Endothelial cell of umbilical vein (primary cell): ENCODE measurements at regions of chr2 and their contacts with region 1.

Region 1: GRCh38 chr2:70616168-70616694 is 62.6 kb upstream of the TGFA start:
- DNase-seq: no peak
- H3K4me3 ChIP-seq: no peak overlapping the region
- H3K27ac ChIP-seq: no peak overlapping the region
- H3K4me1 ChIP-seq: no peaks in the 10 kb centered on the region
- H3K27me3 ChIP-seq: peaks cover 8 to 11% of the 10 kb centered on the region in 2 experiments
- CTCF ChIP-seq: no peak
- POLR2A ChIP-seq: no peak

Region 2: GRCh38 chr2:70333260-70333659 is 283.0 kb before region 1 on chr2:
- CTCF ChIA-PET with region 1: interaction called, 258 read pairs
- POLR2A ChIA-PET with region 1: no interaction called
- dilution Hi-C with region 1: no loop called
- intact Hi-C with region 1: no loop called
- DNase-seq: no peak
- H3K4me3 ChIP-seq: no peak overlapping the region
- H3K27ac ChIP-seq: no peak overlapping the region
- H3K4me1 ChIP-seq: no peaks in the 10 kb centered on the region
- H3K27me3 ChIP-seq: peaks cover 0 to 4% of the 10 kb centered on the region in 2 experiments
- CTCF ChIP-seq: no peak
- POLR2A ChIP-seq: no peak

Region 3: DNA sequence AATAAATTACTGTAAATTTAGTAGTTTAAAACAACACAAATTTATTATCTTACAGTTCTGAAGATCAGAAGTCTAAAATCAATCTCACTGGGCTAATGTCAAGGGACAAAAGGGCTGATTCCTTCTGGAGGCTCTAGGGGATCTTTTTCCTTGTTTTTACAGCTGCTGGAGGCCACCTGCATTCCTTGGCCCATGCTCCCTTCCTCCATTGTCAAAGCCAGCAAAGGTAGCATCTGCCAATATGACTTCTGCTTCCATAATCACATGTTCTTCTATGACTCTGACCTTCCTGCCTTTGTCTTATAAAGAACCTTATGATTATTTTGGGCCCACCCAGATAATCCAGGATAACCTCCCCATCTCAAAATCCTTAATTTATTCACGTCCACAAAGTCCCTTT is 268.4 kb before region 1 on chr2:
- CTCF ChIA-PET with region 1: interaction called, 258 read pairs
- POLR2A ChIA-PET with region 1: no interaction called
- dilution Hi-C with region 1: no loop called
- intact Hi-C with region 1: no loop called
- DNase-seq: no peak
- H3K4me3 ChIP-seq: no peak overlapping the region
- H3K27ac ChIP-seq: no peak overlapping the region
- H3K4me1 ChIP-seq: no peaks in the 10 kb centered on the region
- H3K27me3 ChIP-seq: no peaks in the 10 kb centered on the region
- CTCF ChIP-seq: no peak
- POLR2A ChIP-seq: no peak

Region 4: GRCh38 chr2:70425687-70426301 is 190.4 kb before region 1 on chr2:
- CTCF ChIA-PET with region 1: no interaction called
- POLR2A ChIA-PET with region 1: no interaction called
- dilution Hi-C with region 1: no loop called
- intact Hi-C with region 1: no loop called
- DNase-seq: no peak
- H3K4me3 ChIP-seq: no peak overlapping the region
- H3K27ac ChIP-seq: no peak overlapping the region
- H3K4me1 ChIP-seq: no peaks in the 10 kb centered on the region
- H3K27me3 ChIP-seq: peaks cover 1 to 3% of the 10 kb centered on the region in 2 experiments
- CTCF ChIP-seq: no peak
- POLR2A ChIP-seq: no peak

Region 5: DNA sequence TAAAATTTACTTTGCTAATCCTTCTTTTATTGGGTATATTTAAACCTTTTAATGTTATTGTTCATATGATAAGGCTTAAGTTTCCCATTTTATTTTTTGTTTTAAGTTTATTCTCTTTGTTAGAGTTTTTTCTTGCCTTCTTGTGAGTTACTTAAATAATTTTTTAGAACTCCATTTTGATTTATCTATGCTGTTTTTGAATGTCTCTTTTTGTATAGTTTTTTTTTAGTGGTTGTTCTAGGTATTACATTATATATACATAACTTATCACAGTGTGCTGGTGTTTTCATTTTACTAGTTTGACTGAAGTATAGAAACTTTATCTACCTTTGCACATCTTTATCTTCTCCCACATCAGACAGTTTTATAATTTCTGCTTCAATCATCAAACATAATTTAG is 13.2 kb before region 1 on chr2:
- CTCF ChIA-PET with region 1: interaction called, 13 read pairs
- POLR2A ChIA-PET with region 1: no interaction called
- dilution Hi-C with region 1: no loop called
- intact Hi-C with region 1: no loop called
- DNase-seq: no peak
- H3K4me3 ChIP-seq: no peak overlapping the region
- H3K27ac ChIP-seq: no peak overlapping the region
- H3K4me1 ChIP-seq: no peaks in the 10 kb centered on the region
- H3K27me3 ChIP-seq: peaks cover 0 to 24% of the 10 kb centered on the region in 2 experiments
- CTCF ChIP-seq: no peak
- POLR2A ChIP-seq: no peak

Region 6: DNA sequence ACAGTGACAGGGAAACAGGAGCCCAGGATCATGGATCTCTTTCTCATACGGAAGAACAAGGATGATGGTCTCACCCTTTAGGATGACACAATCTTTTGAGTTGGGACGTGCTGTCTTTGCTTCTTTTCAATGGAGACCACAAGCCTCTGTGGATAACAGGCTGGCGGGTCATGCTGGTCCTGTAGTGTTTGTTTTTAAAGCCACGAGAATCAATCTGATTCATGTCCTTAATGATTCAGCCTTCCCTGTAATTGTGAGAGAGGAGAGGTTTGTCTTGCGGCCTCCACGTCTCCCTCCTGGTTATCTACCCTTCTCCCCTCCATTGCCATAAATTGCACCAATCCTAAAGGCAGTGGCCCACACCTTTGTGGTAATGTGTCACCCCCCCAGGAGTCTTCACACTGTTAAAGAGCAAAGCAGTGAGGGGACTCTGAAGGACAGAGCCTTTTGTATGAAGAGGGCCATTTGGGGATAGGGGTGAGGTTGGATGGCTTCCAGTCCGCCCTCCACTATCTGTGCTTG is 25.1 kb after region 1 on chr2:
- CTCF ChIA-PET with region 1: interaction called, 15 read pairs
- POLR2A ChIA-PET with region 1: no interaction called
- dilution Hi-C with region 1: no loop called
- intact Hi-C with region 1: no loop called
- DNase-seq: no peak
- H3K4me3 ChIP-seq: no peak overlapping the region
- H3K27ac ChIP-seq: no peak overlapping the region
- H3K4me1 ChIP-seq: no peaks in the 10 kb centered on the region
- H3K27me3 ChIP-seq: peaks cover 6 to 9% of the 10 kb centered on the region in 2 experiments
- CTCF ChIP-seq: no peak
- POLR2A ChIP-seq: no peak

Region 7: GRCh38 chr2:71498261-71498701 is 882.0 kb after region 1 on chr2:
- CTCF ChIA-PET with region 1: no interaction called
- POLR2A ChIA-PET with region 1: no interaction called
- dilution Hi-C with region 1: no loop called
- intact Hi-C with region 1: no loop called
- DNase-seq: peak; percentile 72
- H3K4me3 ChIP-seq: no peak overlapping the region
- H3K27ac ChIP-seq: peak overlapping the region; percentile 96
- H3K4me1 ChIP-seq: peaks cover 71% of the 10 kb centered on the region
- H3K27me3 ChIP-seq: no peaks in the 10 kb centered on the region
- CTCF ChIP-seq: no peak
- POLR2A ChIP-seq: no peak